ENCODE measurements at regions of chr13 and their contacts with region 1.

Region 1: GRCh38 chr13:36954542-36954941 is 34.5 kb upstream of the SMAD9 start:
- DNase-seq: peak; percentile 68
- H3K4me3 ChIP-seq: no peak overlapping the region
- H3K27ac ChIP-seq: peak overlapping the region; percentile 55
- H3K4me1 ChIP-seq: peaks cover 24% of the 10 kb centered on the region
- H3K27me3 ChIP-seq: no peaks in the 10 kb centered on the region
- CTCF ChIP-seq: no peak
- POLR2A ChIP-seq: no peak

Region 2: GRCh38 chr13:36766314-36766713 is 188.2 kb before region 1 on chr13:
- CTCF ChIA-PET with region 1: no interaction called
- POLR2A ChIA-PET with region 1: no interaction called
- dilution Hi-C with region 1: no loop called
- intact Hi-C with region 1: no loop called
- DNase-seq: no peak
- H3K4me3 ChIP-seq: no peak overlapping the region
- H3K27ac ChIP-seq: no peak overlapping the region
- H3K4me1 ChIP-seq: no peaks in the 10 kb centered on the region
- H3K27me3 ChIP-seq: peaks cover 3% of the 10 kb centered on the region in 2 experiments
- CTCF ChIP-seq: no peak
- POLR2A ChIP-seq: no peak

Region 3: DNA sequence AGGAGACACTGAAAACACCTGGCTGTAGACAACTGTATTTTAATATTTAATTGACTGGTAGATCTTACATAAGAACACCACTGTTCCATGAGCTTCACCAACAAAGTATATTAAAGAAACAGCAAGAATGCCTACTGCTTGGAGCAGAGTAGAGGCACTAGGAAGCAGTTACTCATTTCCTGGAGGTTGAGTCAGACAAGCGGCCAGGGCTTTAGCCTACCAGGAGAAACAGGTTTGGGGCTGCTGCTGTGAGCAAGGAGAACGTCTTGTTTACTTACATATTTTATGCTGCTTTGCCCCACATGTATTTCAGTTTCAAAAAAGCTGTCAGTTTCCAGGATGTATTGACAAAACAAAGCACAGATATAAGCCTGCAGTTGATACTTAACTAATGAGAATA is 11.2 kb after region 1 on chr13:
- CTCF ChIA-PET with region 1: interaction called, 15 read pairs
- POLR2A ChIA-PET with region 1: no interaction called
- dilution Hi-C with region 1: no loop called
- intact Hi-C with region 1: no loop called
- DNase-seq: peak; percentile 95
- H3K4me3 ChIP-seq: no peak overlapping the region
- H3K27ac ChIP-seq: peak overlapping the region; percentile 93
- H3K4me1 ChIP-seq: peaks cover 33% of the 10 kb centered on the region
- H3K27me3 ChIP-seq: no peaks in the 10 kb centered on the region
- CTCF ChIP-seq: no peak
- POLR2A ChIP-seq: no peak

Measured in endothelial cell of umbilical vein (primary cell).